Esophagus muscularis mucosa (tissue), 4 donors: ENCODE measurements at regions of chr10 and their contacts with region 1.

Region 1: GRCh38 chr10:88990384-88991160 is at the start of gene FAS:
- DNase-seq: peak; percentile 94
- H3K4me3 ChIP-seq: peak within 1 kb of the TSS; percentile 87 to 99 (median 90)
- H3K27ac ChIP-seq: peak within 1 kb of the TSS; percentile 93 to 98 (median 97)
- H3K4me1 ChIP-seq: peaks cover 8 to 77% (median 72%) of the 10 kb centered on the region in 4 donors
- H3K27me3 ChIP-seq: no peaks in the 10 kb centered on the region
- CTCF ChIP-seq: no peak
- EP300 ChIP-seq: no peak
- POLR2A ChIP-seq: peak; percentile 23
- total RNA-seq, gene FAS: 16.6 to 27.5 (median 18.7) TPM

Region 2: DNA sequence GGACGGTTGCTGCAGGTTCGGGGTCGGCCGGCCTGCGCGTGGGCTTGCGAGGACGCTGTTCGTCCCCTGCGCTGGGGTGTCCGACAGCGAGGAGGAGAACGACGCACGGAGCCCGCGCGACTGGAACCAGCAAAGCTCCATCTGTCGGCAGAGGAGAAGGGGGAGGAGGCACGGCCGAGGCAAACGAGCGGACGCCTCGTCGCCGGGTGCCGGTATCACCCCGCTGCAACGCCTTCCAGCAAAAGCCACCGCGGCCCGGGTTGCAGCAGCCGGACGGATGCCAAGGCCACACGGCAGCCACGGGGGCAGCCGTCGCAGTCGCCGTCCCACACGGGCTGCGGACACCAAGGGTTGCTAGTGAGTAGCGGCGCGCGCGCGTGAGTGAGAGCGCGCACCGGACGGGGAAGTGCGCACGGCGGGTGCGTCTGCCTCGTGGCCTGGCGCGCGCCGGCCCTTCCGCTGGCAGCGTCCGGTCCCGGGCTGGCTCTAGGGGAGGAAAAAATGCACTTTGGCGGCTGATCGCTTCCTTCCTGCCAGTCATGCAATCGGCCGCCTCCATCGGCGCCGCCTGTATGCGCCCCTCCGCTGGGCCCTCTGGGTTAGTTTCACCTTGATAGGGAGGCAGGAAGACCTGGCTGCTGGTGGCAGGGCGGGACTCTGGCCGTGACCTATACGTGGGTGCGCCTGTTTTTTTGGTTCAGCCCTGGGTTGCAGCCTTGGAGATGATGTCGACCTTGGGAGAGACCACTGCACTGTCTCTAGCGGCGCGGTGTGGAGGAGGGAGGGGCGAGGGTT is 110.1 kb before region 1 on chr10:
- intact Hi-C with region 1: loop called (anchors 2 kb)
- DNase-seq: peak; percentile 95
- H3K4me3 ChIP-seq: peak overlapping the region; percentile 71 to 84 (median 76)
- H3K27ac ChIP-seq: peak overlapping the region; percentile 85 to 89 (median 88)
- H3K4me1 ChIP-seq: peaks cover 7 to 51% (median 46%) of the 10 kb centered on the region in 4 donors
- H3K27me3 ChIP-seq: no peaks in the 10 kb centered on the region
- CTCF ChIP-seq: peak in 2 of 3 experiments; percentile 9 to 24
- EP300 ChIP-seq: no peak
- POLR2A ChIP-seq: peak; percentile 36